ENCODE measurements at regions of chr1 and their contacts with region 1.

Region 1: GRCh38 chr1:26145041-26145959 is 13.6 kb upstream of the FAM110D start:
- DNase-seq: peak in 5 of 6 donors; percentile 73 to 85 (median 80)
- ATAC-seq: peak; percentile 96 to 100 (median 98)
- H3K4me3 ChIP-seq: no peak overlapping the region
- H3K27ac ChIP-seq: no peak overlapping the region
- H3K4me1 ChIP-seq: no peaks in the 10 kb centered on the region
- H3K27me3 ChIP-seq: no peaks in the 10 kb centered on the region
- CTCF ChIP-seq: peak; percentile 51 to 77 (median 70)

Region 2: GRCh38 chr1:26029471-26030135 is 115.7 kb before region 1 on chr1:
- intact Hi-C with region 1: loop called in 2 of 3 experiments (anchors 5 to 10 kb)
- DNase-seq: peak in 1 of 6 donors; percentile 41
- ATAC-seq: no peak
- H3K4me3 ChIP-seq: no peak overlapping the region
- H3K27ac ChIP-seq: no peak overlapping the region
- H3K4me1 ChIP-seq: no peaks in the 10 kb centered on the region
- H3K27me3 ChIP-seq: no peaks in the 10 kb centered on the region
- CTCF ChIP-seq: no peak

Region 3: DNA sequence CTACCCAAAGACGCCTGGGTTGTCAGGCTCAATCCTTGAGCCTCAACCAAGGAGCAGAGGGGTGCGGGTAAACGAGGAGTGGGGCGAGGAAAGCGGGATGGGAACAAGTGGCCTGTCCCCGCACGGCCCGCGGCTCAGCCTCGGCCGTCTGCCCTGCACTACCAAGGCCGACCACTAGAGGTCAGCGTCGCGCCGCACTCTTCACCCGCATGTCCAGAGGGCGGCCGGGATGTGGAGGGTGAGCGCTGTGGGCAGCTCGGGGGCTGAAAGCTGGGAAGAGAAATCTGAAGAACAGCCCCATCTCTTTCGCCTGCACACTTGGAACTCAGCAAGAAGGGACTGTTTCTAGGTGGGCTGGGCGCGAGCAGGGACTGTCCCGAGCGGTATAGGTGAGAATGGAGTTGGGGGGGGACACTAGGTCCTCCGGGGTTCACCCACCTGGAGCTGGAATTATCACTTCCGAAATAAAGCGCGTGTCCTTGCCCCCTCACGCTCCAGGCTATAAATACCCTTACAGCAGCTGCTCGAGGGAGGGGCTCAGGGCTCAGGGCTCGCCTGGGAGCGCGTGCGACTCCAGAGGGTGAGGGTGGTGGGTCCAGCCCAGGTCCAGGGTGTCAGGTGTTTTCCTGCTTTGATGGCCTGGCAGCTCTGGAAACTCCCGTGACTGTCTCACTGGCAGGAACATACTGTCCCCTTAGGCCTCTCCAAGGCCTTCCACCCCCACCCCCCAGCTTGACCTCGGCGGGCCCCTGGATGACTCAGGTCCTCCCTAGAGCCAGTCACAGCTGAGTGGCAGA is 109.1 kb before region 1 on chr1:
- intact Hi-C with region 1: loop called in 2 of 3 experiments (anchors 5 to 10 kb)
- DNase-seq: peak; percentile 93 to 98 (median 98)
- ATAC-seq: peak; percentile 66 to 93 (median 78)
- H3K4me3 ChIP-seq: peak overlapping the region; percentile 45 to 86 (median 58)
- H3K27ac ChIP-seq: peak overlapping the region; percentile 81 to 92 (median 86)
- H3K4me1 ChIP-seq: peaks cover 20 to 30% (median 27%) of the 10 kb centered on the region in 3 donors
- H3K27me3 ChIP-seq: no peaks in the 10 kb centered on the region
- CTCF ChIP-seq: peak; percentile 99 to 100 (median 100)

Region 4: GRCh38 chr1:26109229-26110164 is 35.8 kb before region 1 on chr1:
- intact Hi-C with region 1: loop called in 1 of 3 experiments (anchors 5 kb)
- DNase-seq: no peak
- ATAC-seq: no peak
- H3K4me3 ChIP-seq: no peak overlapping the region
- H3K27ac ChIP-seq: peak overlapping the region in 1 of 4 donors; percentile 98
- H3K4me1 ChIP-seq: peaks cover 0 to 21% (median 16%) of the 10 kb centered on the region in 3 donors
- H3K27me3 ChIP-seq: no peaks in the 10 kb centered on the region
- CTCF ChIP-seq: no peak

Region 5: DNA sequence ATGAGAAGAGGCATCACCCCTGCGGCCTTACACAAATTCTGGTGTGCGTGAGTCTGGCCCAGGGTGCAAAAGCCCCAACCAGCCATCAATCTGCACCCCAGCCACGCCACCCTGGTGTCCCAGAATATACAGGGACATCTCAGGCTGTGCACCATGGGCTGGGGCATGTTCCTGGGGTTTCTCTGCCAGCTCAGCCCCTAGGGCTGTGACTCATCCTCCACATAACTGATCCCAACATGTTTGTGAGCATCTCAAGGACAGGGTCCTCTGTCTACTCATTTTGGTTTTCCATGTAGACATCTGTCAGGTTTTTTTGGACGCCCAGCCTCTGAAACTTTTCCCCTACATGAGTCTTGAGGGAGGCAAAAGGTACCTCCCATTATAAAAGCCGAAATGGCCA is 226.7 kb after region 1 on chr1:
- intact Hi-C with region 1: no loop called
- DNase-seq: no peak
- ATAC-seq: no peak
- H3K4me3 ChIP-seq: no peak overlapping the region
- H3K27ac ChIP-seq: no peak overlapping the region
- H3K4me1 ChIP-seq: no peaks in the 10 kb centered on the region
- H3K27me3 ChIP-seq: no peaks in the 10 kb centered on the region
- CTCF ChIP-seq: no peak

Region 6: GRCh38 chr1:26440259-26440658 is 295.0 kb after region 1 on chr1:
- intact Hi-C with region 1: no loop called
- DNase-seq: no peak
- ATAC-seq: no peak
- H3K4me3 ChIP-seq: no peak overlapping the region
- H3K27ac ChIP-seq: no peak overlapping the region
- H3K4me1 ChIP-seq: no peaks in the 10 kb centered on the region
- H3K27me3 ChIP-seq: no peaks in the 10 kb centered on the region
- CTCF ChIP-seq: no peak

Measured in pancreas (tissue), 10 donors.